ENCODE measurements at regions of chr16 and their contacts with region 1.

Region 1: DNA sequence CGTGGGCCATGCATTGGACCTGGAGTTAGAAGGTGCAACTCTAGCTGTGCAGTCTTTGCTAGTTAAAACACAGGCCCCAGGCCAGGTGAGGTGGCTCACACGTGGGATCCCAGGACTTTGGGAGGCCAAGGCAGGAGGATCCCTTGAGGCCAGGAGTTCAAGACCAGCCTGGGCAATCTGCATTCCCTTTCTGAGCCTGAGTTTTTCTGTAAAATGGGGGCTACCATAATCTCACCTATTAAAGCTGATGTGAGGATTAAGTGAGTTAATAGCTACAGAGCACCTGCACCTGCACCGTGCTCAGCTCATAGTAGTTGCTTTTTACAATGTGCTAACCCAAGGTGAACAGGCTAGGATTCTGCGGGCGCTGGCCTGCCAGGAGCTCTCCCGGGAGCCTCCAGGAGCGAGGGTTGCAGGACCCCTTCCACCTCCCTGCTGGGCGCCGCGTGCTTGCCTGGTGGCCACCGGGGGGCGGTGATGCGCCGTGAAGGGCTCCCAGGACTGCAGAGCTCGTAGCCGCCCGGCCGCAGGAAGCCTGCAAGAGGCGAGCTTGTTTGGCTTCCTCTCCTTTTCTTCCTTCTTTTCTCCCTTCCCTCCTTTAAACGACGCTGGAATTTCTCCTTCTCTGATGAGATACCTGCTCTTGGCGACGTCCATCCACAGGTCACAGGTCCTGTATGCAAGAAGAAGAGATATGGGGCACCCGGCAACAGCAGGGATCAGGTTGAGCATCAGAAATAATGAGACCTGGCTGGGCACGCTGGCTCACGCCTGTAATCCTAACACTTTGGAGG is 51.3 kb downstream of the ZFP90 start:
- DNase-seq: peak; percentile 75
- H3K27ac ChIP-seq: peak overlapping the region; percentile 49
- CTCF ChIP-seq: peak; percentile 87

Region 2: GRCh38 chr16:68658258-68659008 is 68.0 kb after region 1 on chr16:
- CTCF ChIA-PET with region 1: interaction called, 15 read pairs
- POLR2A ChIA-PET with region 1: no interaction called
- DNase-seq: peak; percentile 94
- H3K27ac ChIP-seq: peak overlapping the region; percentile 99
- CTCF ChIP-seq: no peak

Region 3: DNA sequence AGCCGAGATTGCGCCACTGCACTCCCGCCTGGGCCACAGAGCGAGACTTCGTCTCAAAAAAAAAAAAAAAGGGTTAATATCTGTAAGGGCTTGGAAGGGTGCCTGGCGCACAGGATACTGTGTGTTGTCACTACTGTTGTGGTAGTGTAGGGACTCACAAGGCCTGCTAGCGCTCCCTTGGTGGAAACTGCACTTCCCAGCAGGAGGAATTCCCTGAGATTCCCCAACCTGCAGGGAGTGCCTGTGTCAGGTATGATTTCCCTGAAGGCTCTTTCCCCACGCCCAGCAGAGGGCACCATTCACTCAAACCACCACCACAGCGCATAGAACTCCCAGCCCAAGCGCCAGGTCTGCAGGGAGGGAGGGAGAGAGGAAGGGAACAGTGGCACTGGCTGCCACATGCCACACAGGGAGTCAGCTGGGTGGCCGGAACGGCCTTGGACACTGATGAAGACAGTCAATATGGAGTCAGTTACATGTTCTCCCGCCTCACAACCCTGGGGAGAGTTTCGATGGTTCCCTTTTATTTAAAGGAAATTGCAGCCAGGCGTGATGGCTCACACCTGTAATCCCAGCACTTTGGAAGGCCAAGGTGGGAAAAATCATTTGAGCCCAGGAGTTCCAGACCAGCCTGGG is 114.0 kb after region 1 on chr16:
- CTCF ChIA-PET with region 1: interaction called, 14 read pairs
- POLR2A ChIA-PET with region 1: no interaction called
- DNase-seq: peak; percentile 69
- H3K27ac ChIP-seq: peak overlapping the region; percentile 98
- CTCF ChIP-seq: peak; percentile 81

Region 4: DNA sequence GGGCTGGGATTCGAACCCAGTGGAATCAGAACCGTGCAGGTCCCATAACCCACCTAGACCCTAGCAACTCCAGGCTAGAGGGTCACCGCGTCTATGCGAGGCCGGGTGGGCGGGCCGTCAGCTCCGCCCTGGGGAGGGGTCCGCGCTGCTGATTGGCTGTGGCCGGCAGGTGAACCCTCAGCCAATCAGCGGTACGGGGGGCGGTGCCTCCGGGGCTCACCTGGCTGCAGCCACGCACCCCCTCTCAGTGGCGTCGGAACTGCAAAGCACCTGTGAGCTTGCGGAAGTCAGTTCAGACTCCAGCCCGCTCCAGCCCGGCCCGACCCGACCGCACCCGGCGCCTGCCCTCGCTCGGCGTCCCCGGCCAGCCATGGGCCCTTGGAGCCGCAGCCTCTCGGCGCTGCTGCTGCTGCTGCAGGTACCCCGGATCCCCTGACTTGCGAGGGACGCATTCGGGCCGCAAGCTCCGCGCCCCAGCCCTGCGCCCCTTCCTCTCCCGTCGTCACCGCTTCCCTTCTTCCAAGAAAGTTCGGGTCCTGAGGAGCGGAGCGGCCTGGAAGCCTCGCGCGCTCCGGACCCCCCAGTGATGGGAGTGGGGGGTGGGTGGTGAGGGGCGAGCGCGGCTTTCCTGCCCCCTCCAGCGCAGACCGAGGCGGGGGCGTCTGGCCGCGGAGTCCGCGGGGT is 146.8 kb after region 1 on chr16 and contains the start of gene CDH1:
- CTCF ChIA-PET with region 1: interaction called, 10 read pairs
- POLR2A ChIA-PET with region 1: interaction called, 4 read pairs
- DNase-seq: peak; percentile 99
- H3K27ac ChIP-seq: peak within 1 kb of the TSS; percentile 32
- CTCF ChIP-seq: no peak

Region 5: GRCh38 chr16:68811503-68811902 is 221.1 kb after region 1 on chr16:
- CTCF ChIA-PET with region 1: interaction called, 11 read pairs
- POLR2A ChIA-PET with region 1: no interaction called
- DNase-seq: no peak
- H3K27ac ChIP-seq: no peak overlapping the region
- CTCF ChIP-seq: no peak

Region 6: DNA sequence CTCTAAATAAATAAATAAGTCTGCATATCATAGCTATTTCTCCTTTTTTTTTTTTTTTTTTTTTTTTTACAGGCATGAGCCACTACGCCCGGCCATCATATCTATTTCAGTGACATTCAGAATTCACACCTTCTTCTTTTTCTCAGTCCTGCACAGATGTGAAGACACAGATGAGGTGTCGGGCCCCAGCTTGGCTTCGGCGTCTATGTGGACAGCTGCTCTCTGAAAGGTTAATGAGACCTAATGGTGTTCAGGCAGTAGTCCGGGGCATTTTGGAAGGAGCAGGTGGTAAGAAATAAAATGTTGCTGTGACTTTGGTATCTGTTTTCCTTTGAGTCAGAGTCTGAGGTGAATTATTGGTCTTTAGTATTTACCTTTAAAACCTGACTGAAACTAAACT is 276.5 kb after region 1 on chr16:
- CTCF ChIA-PET with region 1: no interaction called
- POLR2A ChIA-PET with region 1: no interaction called
- DNase-seq: no peak
- H3K27ac ChIP-seq: no peak overlapping the region
- CTCF ChIP-seq: no peak

Region 7: GRCh38 chr16:68910051-68910450 is 319.7 kb after region 1 on chr16:
- CTCF ChIA-PET with region 1: no interaction called
- POLR2A ChIA-PET with region 1: no interaction called
- DNase-seq: no peak
- H3K27ac ChIP-seq: no peak overlapping the region
- CTCF ChIP-seq: no peak

Measured in RWPE1 (cell line).